ENCODE measurements at regions of chr3 and their contacts with region 1.

Region 1: GRCh38 chr3:99313485-99313884 is 324.9 kb upstream of the COL8A1 start:
- DNase-seq: peak; percentile 89
- H3K4me3 ChIP-seq: no peak overlapping the region
- H3K27ac ChIP-seq: peak overlapping the region; percentile 75
- H3K4me1 ChIP-seq: peaks cover 29% of the 10 kb centered on the region
- H3K27me3 ChIP-seq: no peaks in the 10 kb centered on the region
- CTCF ChIP-seq: no peak
- POLR2A ChIP-seq: no peak

Region 2: DNA sequence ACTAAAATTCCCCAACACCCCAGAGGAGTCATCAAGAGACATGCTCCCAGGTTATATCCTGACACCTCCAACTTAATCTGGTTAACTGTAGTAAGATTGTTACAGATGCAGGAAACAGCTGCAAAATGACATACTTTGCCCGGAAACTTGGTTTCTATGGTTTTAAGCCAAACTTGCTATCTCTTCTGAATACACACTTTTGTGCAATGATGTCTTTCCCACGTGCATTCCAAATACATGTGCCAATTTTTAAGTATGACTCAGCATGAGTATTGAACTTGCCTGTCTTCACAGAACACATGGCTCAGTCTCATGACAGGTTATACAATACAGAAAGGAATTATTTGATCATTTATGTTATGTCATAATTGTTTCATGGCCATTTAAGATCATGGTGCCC is 205.0 kb before region 1 on chr3:
- CTCF ChIA-PET with region 1: no interaction called
- POLR2A ChIA-PET with region 1: no interaction called
- dilution Hi-C with region 1: no loop called
- intact Hi-C with region 1: loop called (anchors 5 kb)
- DNase-seq: peak; percentile 97
- H3K4me3 ChIP-seq: no peak overlapping the region
- H3K27ac ChIP-seq: peak overlapping the region; percentile 79
- H3K4me1 ChIP-seq: peaks cover 17% of the 10 kb centered on the region
- H3K27me3 ChIP-seq: no peaks in the 10 kb centered on the region
- CTCF ChIP-seq: no peak
- POLR2A ChIP-seq: no peak

Region 3: DNA sequence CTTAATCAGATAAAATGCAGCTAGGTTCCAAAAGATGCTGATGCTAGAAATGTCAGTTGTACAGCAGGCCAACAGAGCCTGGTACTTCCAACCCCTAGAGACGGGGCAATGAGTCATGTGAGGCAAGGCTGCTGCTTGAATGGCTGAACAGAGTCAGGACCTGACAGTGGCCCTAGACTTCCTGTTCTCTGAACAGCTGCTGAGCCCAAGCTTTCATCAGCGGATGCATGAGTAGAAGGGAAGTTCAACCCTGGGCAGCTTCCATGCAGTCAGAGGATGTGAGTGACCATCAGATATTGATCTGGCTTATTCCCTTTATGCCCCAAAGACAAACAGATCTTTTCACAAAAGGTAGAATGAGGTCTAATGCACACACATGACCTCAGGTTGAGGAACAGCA is 42.0 kb after region 1 on chr3:
- CTCF ChIA-PET with region 1: no interaction called
- POLR2A ChIA-PET with region 1: no interaction called
- dilution Hi-C with region 1: no loop called
- intact Hi-C with region 1: loop called (anchors 5 kb)
- DNase-seq: peak; percentile 92
- H3K4me3 ChIP-seq: no peak overlapping the region
- H3K27ac ChIP-seq: peak overlapping the region; percentile 47
- H3K4me1 ChIP-seq: peaks cover 14% of the 10 kb centered on the region
- H3K27me3 ChIP-seq: no peaks in the 10 kb centered on the region
- CTCF ChIP-seq: no peak
- POLR2A ChIP-seq: no peak

Measured in endothelial cell of umbilical vein (primary cell).